T-cell (primary cell): ENCODE measurements at regions of chr7 and their contacts with region 1.

Region 1: DNA sequence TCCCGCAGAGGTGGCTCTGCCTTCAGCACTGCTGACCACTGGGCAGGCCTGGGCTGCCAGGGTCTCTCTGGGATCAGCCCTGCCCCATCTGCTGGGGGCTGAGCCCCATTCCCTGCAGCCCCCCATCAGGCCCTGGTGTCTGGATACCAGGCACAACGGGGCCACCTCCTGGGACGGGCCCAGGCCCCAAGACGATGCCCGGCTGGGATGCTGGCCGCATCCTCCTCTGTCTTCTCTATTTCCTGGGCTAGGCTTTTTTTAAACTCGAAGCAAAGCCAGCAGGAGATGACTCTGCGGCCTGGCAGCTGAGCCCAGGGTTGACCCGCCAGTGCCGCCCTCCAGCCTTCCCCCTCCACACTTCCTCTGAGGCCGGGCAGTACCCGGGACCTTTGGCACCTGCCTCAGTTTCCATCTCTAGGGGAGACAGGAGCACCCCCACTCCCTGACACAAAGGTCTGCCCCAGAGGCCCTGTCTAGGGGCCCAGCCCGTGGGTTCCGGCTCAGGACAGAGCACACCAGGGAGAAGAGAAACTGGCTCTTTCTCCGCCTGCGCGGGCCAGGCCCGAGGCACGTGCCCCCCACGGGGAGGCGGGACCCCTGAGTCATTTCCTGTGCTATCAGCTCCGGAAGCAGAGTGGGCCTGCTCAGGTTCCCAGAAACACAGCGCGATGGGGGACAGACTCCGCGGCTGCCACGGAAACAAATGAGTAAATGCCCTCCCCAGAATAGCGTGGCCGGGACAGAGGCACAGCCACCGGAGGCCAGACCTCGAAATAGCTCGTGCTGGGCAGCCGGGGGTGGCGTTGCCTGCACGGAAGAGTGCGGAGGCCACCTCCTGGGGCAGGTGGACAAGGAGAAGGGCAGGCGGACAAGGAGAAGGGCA is 84.6 kb upstream of the PDGFA start:
- DNase-seq: peak; percentile 80 to 95 (median 91)
- ATAC-seq: peak; percentile 78 to 90 (median 88)
- H3K4me3 ChIP-seq: peak overlapping the region; percentile 25 to 52
- H3K4me3 Mint-ChIP-seq: peak overlapping the region; percentile 85 to 92 (median 92)
- H3K27ac ChIP-seq: peak overlapping the region; percentile 99
- H3K27ac Mint-ChIP-seq: peak overlapping the region; percentile 99 to 100
- H3K4me1 ChIP-seq: peaks cover 25 to 84% of the 10 kb centered on the region in 2 experiments
- H3K4me1 Mint-ChIP-seq: peaks cover 53 to 70% (median 69%) of the 10 kb centered on the region in 3 donors
- H3K27me3 ChIP-seq: no peaks in the 10 kb centered on the region
- H3K27me3 Mint-ChIP-seq: no peaks in the 10 kb centered on the region

Region 2: GRCh38 chr7:507016-507945 is 97.0 kb before region 1 on chr7:
- CTCF ChIA-PET with region 1: no interaction called
- POLR2A ChIA-PET with region 1: no interaction called
- DNase-seq: no peak
- ATAC-seq: no peak
- H3K4me3 ChIP-seq: no peak overlapping the region
- H3K4me3 Mint-ChIP-seq: no peak overlapping the region
- H3K27ac ChIP-seq: no peak overlapping the region
- H3K27ac Mint-ChIP-seq: no peak overlapping the region
- H3K4me1 ChIP-seq: no peaks in the 10 kb centered on the region
- H3K4me1 Mint-ChIP-seq: no peaks in the 10 kb centered on the region
- H3K27me3 ChIP-seq: peaks cover 0 to 9% of the 10 kb centered on the region in 2 experiments
- H3K27me3 Mint-ChIP-seq: peaks cover 0 to 3% of the 10 kb centered on the region in 2 donors

Region 3: DNA sequence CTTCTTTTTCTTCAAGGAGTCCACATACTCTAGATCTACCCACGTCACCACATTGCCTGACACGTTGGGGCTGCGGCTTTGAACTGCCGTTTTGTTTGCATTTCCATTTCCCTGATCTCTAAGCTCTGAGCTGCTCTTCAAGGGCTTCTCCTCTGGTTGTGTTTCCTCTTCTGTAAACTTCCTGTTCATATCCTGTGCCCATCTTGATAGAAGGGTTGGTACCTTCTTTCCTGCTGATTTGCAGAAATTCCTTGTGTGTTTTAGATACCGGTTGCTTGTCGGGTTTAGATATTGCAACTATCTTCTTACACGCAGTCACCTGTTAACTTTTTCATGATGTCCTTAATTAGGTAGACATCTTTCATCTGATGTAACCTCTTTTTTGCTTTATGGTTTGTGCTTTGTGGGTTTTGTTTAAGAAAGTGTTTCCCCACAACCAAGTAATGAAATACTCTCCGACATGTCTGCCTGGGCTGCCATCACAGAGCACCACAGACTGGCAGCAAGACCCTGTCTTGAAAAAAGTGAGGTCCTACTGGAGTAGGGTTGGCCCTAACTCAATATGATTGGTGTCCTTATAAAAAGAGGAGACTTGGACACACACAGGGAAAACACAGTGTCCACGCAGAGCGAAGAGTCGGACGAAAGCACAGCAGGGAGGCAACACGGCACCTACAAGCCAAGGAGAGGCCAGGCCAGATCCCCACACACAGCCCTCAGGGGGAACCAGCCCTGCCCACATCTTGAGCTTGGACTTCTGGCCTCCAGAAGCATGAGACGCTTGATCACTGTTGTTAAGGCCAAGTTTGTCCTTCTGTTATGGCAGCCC is 14.5 kb after region 1 on chr7:
- CTCF ChIA-PET with region 1: interaction called in 1 of 2 experiments, 6 read pairs
- POLR2A ChIA-PET with region 1: interaction called in 1 of 2 experiments, 14 read pairs
- DNase-seq: peak; percentile 49 to 94 (median 81)
- ATAC-seq: peak; percentile 89 to 94 (median 93)
- H3K4me3 ChIP-seq: peak overlapping the region in 1 of 2 donors; percentile 9
- H3K4me3 Mint-ChIP-seq: peak overlapping the region; percentile 75 to 79 (median 78)
- H3K27ac ChIP-seq: peak overlapping the region; percentile 98
- H3K27ac Mint-ChIP-seq: peak overlapping the region; percentile 99 to 100
- H3K4me1 ChIP-seq: peaks cover 39 to 63% of the 10 kb centered on the region in 2 experiments
- H3K4me1 Mint-ChIP-seq: peaks cover 52 to 68% (median 66%) of the 10 kb centered on the region in 3 donors
- H3K27me3 ChIP-seq: no peaks in the 10 kb centered on the region
- H3K27me3 Mint-ChIP-seq: no peaks in the 10 kb centered on the region

Region 4: GRCh38 chr7:664987-665735 is 60.9 kb after region 1 on chr7:
- CTCF ChIA-PET with region 1: no interaction called
- POLR2A ChIA-PET with region 1: no interaction called
- DNase-seq: no peak
- ATAC-seq: no peak
- H3K4me3 ChIP-seq: no peak overlapping the region
- H3K4me3 Mint-ChIP-seq: no peak overlapping the region
- H3K27ac ChIP-seq: no peak overlapping the region
- H3K27ac Mint-ChIP-seq: no peak overlapping the region
- H3K4me1 ChIP-seq: peaks cover 13 to 15% of the 10 kb centered on the region in 2 experiments
- H3K4me1 Mint-ChIP-seq: peaks cover 7 to 17% (median 9%) of the 10 kb centered on the region in 3 donors
- H3K27me3 ChIP-seq: no peaks in the 10 kb centered on the region
- H3K27me3 Mint-ChIP-seq: no peaks in the 10 kb centered on the region

Region 5: DNA sequence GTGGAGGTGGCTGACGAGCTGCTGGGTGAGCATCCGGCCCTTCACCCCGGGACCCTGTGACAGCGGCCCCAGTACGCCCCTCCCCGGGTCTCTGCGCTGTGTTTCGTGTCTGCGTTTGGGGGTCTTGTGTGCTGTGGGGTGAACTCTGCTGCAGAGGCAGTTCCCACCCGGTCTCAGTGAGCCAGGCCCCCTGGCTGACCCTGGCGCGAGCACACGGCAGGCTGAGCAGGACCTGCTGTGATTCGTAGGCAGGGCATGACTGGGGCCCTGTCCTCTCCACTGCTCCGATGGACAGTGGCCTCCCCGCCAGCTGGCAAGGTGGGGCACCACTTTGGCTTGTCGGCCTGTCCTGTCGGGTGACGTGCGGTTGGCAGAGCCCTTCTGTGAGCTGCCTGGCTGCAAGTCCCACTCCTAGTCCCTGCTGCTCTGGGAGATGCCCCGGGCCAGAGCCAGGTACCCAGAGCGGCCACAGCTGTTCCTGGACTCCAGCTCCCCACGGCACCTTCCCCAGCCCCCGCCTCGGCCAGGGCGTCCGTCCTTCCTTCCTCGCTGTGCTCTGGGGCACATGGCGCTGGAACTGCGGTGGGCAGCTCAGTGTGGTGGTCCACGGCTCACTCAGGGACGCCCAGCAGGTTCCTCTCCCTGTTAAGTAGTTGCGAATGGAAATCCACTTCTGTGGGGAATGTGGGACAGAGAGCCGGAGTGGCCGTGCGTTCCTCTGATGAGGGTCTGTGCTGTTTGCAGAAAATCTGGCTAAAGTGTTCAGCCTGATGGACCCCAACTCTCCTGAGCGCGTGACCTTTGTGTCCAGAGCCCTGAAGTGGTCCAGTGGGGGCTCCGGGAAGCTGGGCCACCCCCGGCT is 282.6 kb after region 1 on chr7:
- CTCF ChIA-PET with region 1: no interaction called
- POLR2A ChIA-PET with region 1: no interaction called
- DNase-seq: no peak
- ATAC-seq: no peak
- H3K4me3 ChIP-seq: no peak overlapping the region
- H3K4me3 Mint-ChIP-seq: no peak overlapping the region
- H3K27ac ChIP-seq: no peak overlapping the region
- H3K27ac Mint-ChIP-seq: no peak overlapping the region
- H3K4me1 ChIP-seq: peaks cover 0 to 41% of the 10 kb centered on the region in 2 experiments
- H3K4me1 Mint-ChIP-seq: peaks cover 6 to 21% (median 18%) of the 10 kb centered on the region in 3 donors
- H3K27me3 ChIP-seq: no peaks in the 10 kb centered on the region
- H3K27me3 Mint-ChIP-seq: no peaks in the 10 kb centered on the region